ENCODE measurements at regions of chr13 and their contacts with region 1.

Region 1: GRCh38 chr13:51814825-51815650 is 11.1 kb upstream of the DHRS12 start:
- DNase-seq: peak; percentile 82
- H3K4me3 Mint-ChIP-seq: peak overlapping the region; percentile 39
- H3K27ac Mint-ChIP-seq: no peak overlapping the region
- H3K4me1 Mint-ChIP-seq: peaks cover 15% of the 10 kb centered on the region
- H3K27me3 Mint-ChIP-seq: peaks cover 37% of the 10 kb centered on the region
- CTCF ChIP-seq: peak; percentile 80

Region 2: DNA sequence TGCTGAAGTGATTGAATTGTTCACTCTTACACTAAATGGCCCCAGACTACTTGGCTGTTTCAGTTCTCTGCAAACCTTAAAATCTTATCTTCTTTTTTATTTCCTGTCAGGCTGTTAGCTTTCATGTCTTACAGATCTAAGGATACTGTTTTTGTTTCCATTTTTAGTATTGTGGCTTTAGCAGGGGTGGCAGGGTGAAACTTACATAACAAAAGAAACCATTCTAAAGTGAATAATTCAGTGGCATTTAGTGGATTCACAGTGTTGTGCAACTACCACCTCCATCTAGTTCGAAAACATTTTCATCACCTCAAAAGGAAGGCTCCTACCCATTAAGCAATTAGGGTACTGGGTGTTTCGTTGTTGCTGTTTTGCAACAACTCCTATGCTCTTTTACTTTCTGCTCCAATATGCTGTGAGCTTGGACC is 10.1 kb after region 1 on chr13:
- CTCF ChIA-PET with region 1: interaction called, 36 read pairs
- POLR2A ChIA-PET with region 1: no interaction called
- intact Hi-C with region 1: no loop called
- DNase-seq: peak; percentile 73
- H3K4me3 Mint-ChIP-seq: no peak overlapping the region
- H3K27ac Mint-ChIP-seq: no peak overlapping the region
- H3K4me1 Mint-ChIP-seq: peaks cover 16% of the 10 kb centered on the region
- H3K27me3 Mint-ChIP-seq: peaks cover 35% of the 10 kb centered on the region
- CTCF ChIP-seq: no peak

Region 3: GRCh38 chr13:51840917-51841316 is 25.9 kb after region 1 on chr13:
- CTCF ChIA-PET with region 1: interaction called, 69 read pairs
- POLR2A ChIA-PET with region 1: no interaction called
- intact Hi-C with region 1: no loop called
- DNase-seq: no peak
- H3K4me3 Mint-ChIP-seq: no peak overlapping the region
- H3K27ac Mint-ChIP-seq: no peak overlapping the region
- H3K4me1 Mint-ChIP-seq: peaks cover 9% of the 10 kb centered on the region
- H3K27me3 Mint-ChIP-seq: peaks cover 42% of the 10 kb centered on the region
- CTCF ChIP-seq: no peak

Region 4: DNA sequence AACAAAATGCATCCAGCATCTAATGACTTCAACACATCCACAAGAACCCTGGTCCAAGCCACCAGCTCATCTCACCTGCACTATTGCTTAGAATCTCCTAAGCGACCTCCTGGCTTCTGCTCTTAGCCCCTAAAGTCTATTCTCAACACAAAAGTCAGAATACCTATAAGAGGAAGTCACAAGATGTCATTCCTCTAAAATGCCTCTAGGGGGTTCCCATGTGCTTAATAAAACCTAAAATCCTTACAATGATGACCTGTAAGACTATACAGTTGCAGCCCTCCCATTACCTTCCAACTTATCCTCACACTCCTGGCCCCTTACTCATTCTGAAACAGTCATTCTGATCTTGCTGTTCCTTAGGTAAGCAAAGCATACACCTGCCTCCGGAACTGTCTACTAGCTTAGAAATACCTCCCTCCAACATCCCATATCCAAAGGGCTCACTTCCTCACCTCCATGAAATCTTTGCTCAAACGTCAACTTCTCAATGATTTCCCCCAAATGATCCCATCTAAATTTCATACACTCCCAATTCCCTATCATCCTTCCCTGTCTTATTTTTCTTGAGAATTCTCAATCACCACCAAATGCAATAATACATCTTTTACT is 186.2 kb after region 1 on chr13:
- CTCF ChIA-PET with region 1: interaction called, 28 read pairs
- POLR2A ChIA-PET with region 1: no interaction called
- intact Hi-C with region 1: loop called (anchors 1 kb)
- DNase-seq: peak; percentile 51
- H3K4me3 Mint-ChIP-seq: no peak overlapping the region
- H3K27ac Mint-ChIP-seq: no peak overlapping the region
- H3K4me1 Mint-ChIP-seq: peaks cover 27% of the 10 kb centered on the region
- H3K27me3 Mint-ChIP-seq: peaks cover 12% of the 10 kb centered on the region
- CTCF ChIP-seq: peak; percentile 60

Region 5: GRCh38 chr13:52128714-52129700 is 314.0 kb after region 1 on chr13 and contains the start of gene NEK5:
- CTCF ChIA-PET with region 1: interaction called, 69 read pairs
- POLR2A ChIA-PET with region 1: interaction called, 6 read pairs
- intact Hi-C with region 1: loop called (anchors 1 kb)
- DNase-seq: peak; percentile 56
- H3K4me3 Mint-ChIP-seq: peak within 1 kb of the TSS; percentile 78
- H3K27ac Mint-ChIP-seq: no peak within 1 kb of the TSS
- H3K4me1 Mint-ChIP-seq: peaks cover 5% of the 10 kb centered on the region
- H3K27me3 Mint-ChIP-seq: no peaks in the 10 kb centered on the region
- CTCF ChIP-seq: peak; percentile 79
- total RNA-seq, gene NEK5: 0.21 and 0.61 TPM in 2 replicates

Measured in MCF 10A (cell line).